Ovary (tissue), 10 donors: ENCODE measurements at regions of chr2 and their contacts with region 1.

Region 1: GRCh38 chr2:143229952-143230351 is 100.7 kb downstream of the ARHGAP15 start:
- DNase-seq: no peak
- H3K4me3 ChIP-seq: no peak overlapping the region
- H3K27ac ChIP-seq: no peak overlapping the region
- H3K4me1 ChIP-seq: no peaks in the 10 kb centered on the region
- H3K27me3 ChIP-seq: no peaks in the 10 kb centered on the region
- CTCF ChIP-seq: no peak
- EP300 ChIP-seq: no peak
- POLR2A ChIP-seq: no peak

Region 2: GRCh38 chr2:143162123-143162837 is 67.7 kb before region 1 on chr2:
- intact Hi-C with region 1: loop called in 1 of 4 experiments (anchors 10 kb)
- DNase-seq: peak; percentile 29 to 46 (median 41)
- H3K4me3 ChIP-seq: no peak overlapping the region
- H3K27ac ChIP-seq: no peak overlapping the region
- H3K4me1 ChIP-seq: no peaks in the 10 kb centered on the region
- H3K27me3 ChIP-seq: no peaks in the 10 kb centered on the region
- CTCF ChIP-seq: peak; percentile 25 to 47 (median 40)
- EP300 ChIP-seq: no peak
- POLR2A ChIP-seq: no peak